Tibial artery (tissue), 4 donors: ENCODE measurements at regions of chr1 and their contacts with region 1.

Region 1: GRCh38 chr1:164637461-164638375 is 78.7 kb downstream of the PBX1 start:
- DNase-seq: peak; percentile 51 to 80
- H3K4me3 ChIP-seq: no peak overlapping the region
- H3K27ac ChIP-seq: peak overlapping the region; percentile 50 to 52
- H3K4me1 ChIP-seq: peaks cover 0 to 79% (median 43%) of the 10 kb centered on the region in 4 donors
- H3K27me3 ChIP-seq: no peaks in the 10 kb centered on the region
- CTCF ChIP-seq: no peak

Region 2: GRCh38 chr1:163633366-163633765 is 1004.4 kb before region 1 on chr1:
- intact Hi-C with region 1: no loop called
- DNase-seq: no peak
- H3K4me3 ChIP-seq: no peak overlapping the region
- H3K27ac ChIP-seq: no peak overlapping the region
- H3K4me1 ChIP-seq: no peaks in the 10 kb centered on the region
- H3K27me3 ChIP-seq: no peaks in the 10 kb centered on the region
- CTCF ChIP-seq: no peak

Region 3: GRCh38 chr1:164155347-164155746 is 482.4 kb before region 1 on chr1:
- intact Hi-C with region 1: no loop called
- DNase-seq: no peak
- H3K4me3 ChIP-seq: no peak overlapping the region
- H3K27ac ChIP-seq: no peak overlapping the region
- H3K4me1 ChIP-seq: no peaks in the 10 kb centered on the region
- H3K27me3 ChIP-seq: no peaks in the 10 kb centered on the region
- CTCF ChIP-seq: no peak

Region 4: GRCh38 chr1:164786980-164787833 is 149.5 kb after region 1 on chr1:
- intact Hi-C with region 1: loop called (anchors 10 kb)
- DNase-seq: peak; percentile 88 to 91
- H3K4me3 ChIP-seq: no peak overlapping the region
- H3K27ac ChIP-seq: peak overlapping the region; percentile 6 to 59
- H3K4me1 ChIP-seq: peaks cover 0 to 60% (median 43%) of the 10 kb centered on the region in 4 donors
- H3K27me3 ChIP-seq: no peaks in the 10 kb centered on the region
- CTCF ChIP-seq: peak; percentile 86 to 92